Common myeloid progenitor, CD34-positive (primary cell): ENCODE measurements at regions of chr14 and their contacts with region 1.

Region 1: DNA sequence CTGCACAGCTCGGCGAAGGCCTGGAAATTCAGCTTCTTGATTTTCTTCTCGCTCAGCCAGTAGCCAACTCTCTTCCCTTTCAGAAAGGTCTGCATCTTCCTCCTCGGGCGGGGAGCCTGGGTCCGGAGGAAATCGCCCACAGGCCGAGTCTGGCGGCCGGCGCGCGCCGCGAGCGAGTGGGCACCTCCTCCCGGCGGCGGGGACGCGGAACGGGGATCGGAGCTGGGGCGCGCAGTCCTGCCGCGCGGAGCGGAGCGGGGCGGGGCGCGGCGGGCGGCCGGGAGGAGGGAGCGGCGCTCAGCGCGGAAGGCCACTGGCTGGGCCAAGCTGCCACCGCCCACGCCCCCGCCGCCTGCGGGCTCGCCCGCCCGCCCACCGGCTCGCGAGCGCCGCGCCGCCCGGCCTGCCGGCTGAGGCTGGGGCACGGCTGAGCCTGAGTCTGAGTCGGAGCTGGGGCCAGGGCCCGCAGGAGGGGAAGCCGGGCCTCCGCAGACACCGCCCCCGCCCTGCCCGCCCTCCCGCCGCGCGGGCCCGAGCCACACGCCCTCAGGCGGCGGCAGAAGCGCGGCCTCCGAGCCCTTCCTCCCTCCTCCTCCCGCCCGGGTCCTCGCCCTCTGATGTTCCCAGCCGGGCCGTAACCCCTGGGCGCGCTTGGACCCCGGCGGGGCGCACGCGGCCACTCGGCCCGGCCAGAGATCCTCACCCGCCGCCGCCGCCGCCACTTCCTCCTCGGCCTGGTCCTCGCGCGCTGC is 480 bp downstream of the ITPK1 start:
- DNase-seq: peak; percentile 80 to 92 (median 88)
- H3K4me3 ChIP-seq: peak overlapping the region; percentile 77 to 91 (median 84)
- H3K27ac ChIP-seq: peak overlapping the region; percentile 33 to 54
- H3K4me1 ChIP-seq: peaks cover 9 to 54% (median 39%) of the 10 kb centered on the region in 4 experiments
- H3K27me3 ChIP-seq: no peaks in the 10 kb centered on the region

Region 2: GRCh38 chr14:92951912-92952471 is 163.3 kb before region 1 on chr14:
- CTCF ChIA-PET with region 1: interaction called, 11 read pairs
- POLR2A ChIA-PET with region 1: no interaction called
- DNase-seq: peak; percentile 65 to 83 (median 75)
- H3K4me3 ChIP-seq: no peak overlapping the region
- H3K27ac ChIP-seq: peak overlapping the region in 1 of 2 experiments; percentile 30
- H3K4me1 ChIP-seq: no peaks in the 10 kb centered on the region
- H3K27me3 ChIP-seq: no peaks in the 10 kb centered on the region

Region 3: DNA sequence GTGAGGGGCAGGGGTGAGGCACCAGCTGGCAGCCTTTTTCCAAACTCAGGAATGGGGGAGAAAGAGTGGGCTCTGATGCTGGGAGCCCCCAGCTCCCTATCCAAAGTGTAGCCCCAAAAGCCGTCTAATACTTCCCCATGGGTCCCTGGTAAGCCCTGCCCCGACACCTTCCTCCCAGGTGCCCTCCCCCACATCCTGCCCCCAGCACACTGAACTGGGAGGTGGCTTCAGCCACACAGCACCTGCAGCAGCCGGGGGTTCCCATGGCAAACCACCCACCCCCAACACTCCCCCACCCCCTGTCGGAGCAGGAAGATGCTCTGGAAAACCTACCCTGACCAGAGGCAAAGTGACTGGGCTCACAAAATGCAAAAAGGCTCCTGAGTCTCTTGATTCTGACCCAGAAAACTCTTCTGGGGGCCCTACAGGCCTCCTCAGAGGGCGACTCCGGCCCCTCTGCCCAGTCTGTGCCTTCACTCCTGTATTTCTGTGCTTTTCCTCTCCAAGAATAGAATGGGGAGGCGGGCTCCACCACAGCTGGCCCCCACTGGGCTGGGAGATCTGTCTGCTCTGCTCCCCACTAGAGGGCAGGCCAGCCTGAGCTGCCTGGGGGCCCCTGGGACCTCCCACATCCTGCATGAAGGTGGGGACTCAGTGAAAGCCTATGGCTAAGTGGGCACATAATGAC is 81.1 kb before region 1 on chr14:
- CTCF ChIA-PET with region 1: interaction called, 44 read pairs
- POLR2A ChIA-PET with region 1: interaction called, 3 read pairs
- DNase-seq: peak; percentile 38 to 64 (median 64)
- H3K4me3 ChIP-seq: no peak overlapping the region
- H3K27ac ChIP-seq: no peak overlapping the region
- H3K4me1 ChIP-seq: peaks cover 0 to 33% (median 28%) of the 10 kb centered on the region in 4 experiments
- H3K27me3 ChIP-seq: no peaks in the 10 kb centered on the region

Region 4: DNA sequence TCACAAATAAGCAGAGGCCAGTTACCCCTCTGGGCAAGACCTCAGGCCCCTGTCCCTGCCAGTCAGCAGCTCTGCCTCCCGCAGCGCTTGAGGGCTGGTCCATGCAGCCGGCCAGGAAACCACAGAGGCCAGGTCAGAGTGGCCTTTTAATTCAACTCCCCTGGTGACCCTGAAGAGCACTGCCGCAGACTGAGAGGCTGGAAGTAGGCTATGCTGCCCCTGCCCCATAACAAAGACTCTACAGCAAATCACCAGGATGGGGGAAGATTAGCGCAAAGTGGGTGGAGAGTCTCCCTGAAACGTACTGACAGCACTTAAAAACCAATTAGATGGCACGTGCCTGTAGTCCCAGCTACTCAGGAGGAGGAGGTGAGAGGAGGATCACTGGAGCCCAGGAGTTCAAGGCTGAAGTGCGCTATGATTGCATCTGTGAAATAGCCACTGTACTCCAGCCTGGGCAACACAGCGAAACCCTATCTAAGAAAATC is 70.0 kb before region 1 on chr14:
- CTCF ChIA-PET with region 1: interaction called, 24 read pairs
- POLR2A ChIA-PET with region 1: no interaction called
- DNase-seq: no peak
- H3K4me3 ChIP-seq: no peak overlapping the region
- H3K27ac ChIP-seq: peak overlapping the region in 1 of 2 experiments; percentile 39
- H3K4me1 ChIP-seq: peaks cover 0 to 88% (median 55%) of the 10 kb centered on the region in 4 experiments
- H3K27me3 ChIP-seq: no peaks in the 10 kb centered on the region

Region 5: DNA sequence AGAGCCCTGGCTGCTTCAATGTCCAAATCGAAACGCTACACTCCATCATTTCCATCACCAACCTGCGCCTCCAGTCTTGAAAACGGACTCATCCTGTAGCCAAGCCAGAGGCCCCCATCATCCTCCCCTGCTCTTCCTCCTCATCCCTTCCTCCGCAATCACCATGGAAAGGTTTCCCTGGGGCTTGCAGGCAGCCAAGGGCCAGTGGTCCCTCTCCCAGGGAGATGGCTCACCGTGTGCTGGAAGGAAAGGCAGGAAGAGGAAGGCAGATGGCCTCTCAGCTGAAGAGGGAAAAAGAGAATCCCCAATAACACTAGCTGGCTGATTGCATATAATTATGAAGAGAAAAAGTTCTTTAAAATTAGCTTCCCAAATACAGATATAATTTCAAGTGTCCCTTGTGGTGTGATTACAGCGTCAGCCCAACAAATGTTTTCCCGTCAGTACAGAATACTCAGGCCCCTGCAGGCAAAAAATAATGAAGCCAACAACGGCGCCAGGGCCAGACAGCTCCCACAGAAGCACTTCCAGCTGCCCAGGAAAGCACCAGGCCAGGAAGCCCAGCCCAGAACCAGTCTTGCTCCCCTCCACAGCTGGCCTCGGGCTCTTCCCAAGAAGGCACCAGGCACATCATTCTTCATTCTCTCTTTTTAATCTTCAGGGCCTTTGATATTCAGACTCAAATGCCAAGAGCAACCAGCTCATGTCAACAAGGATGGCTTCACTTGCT is 24.3 kb before region 1 on chr14:
- CTCF ChIA-PET with region 1: interaction called, 13 read pairs
- POLR2A ChIA-PET with region 1: no interaction called
- DNase-seq: no peak
- H3K4me3 ChIP-seq: no peak overlapping the region
- H3K27ac ChIP-seq: no peak overlapping the region
- H3K4me1 ChIP-seq: peaks cover 0 to 24% (median 11%) of the 10 kb centered on the region in 4 experiments
- H3K27me3 ChIP-seq: no peaks in the 10 kb centered on the region

Region 6: DNA sequence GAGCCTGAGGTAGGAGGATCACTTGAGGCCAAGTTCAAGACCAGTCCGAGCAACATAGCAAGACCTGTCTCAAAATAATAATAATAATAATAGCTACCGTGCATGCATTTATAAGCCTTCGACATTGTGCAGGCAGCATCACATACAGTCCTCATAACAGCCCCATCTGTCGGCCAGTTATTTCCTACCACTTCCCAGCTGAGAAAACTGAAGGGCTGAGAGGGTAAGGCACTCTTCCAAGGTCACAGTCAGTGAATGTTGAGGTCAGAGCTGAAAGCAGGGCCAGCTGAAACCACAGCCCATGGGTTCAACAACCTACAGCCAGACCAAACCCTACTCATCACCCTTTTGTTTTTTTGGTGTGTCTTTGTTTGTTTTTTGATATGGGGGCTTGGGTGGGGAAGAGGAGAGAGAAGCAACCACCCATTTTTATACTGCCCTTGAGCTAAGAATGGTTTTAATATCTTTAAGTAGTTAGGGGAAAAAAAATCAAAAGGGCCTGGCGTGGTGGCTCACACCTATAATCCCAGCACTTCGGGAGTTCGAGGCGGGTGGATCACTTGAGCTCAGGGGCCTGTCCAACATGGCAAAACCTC is 17.3 kb after region 1 on chr14:
- CTCF ChIA-PET with region 1: interaction called, 225 read pairs
- POLR2A ChIA-PET with region 1: no interaction called
- DNase-seq: peak; percentile 45 to 71 (median 70)
- H3K4me3 ChIP-seq: no peak overlapping the region
- H3K27ac ChIP-seq: no peak overlapping the region
- H3K4me1 ChIP-seq: no peaks in the 10 kb centered on the region
- H3K27me3 ChIP-seq: no peaks in the 10 kb centered on the region

Region 7: GRCh38 chr14:93146119-93146518 is 30.9 kb after region 1 on chr14:
- CTCF ChIA-PET with region 1: interaction called, 225 read pairs
- POLR2A ChIA-PET with region 1: no interaction called
- DNase-seq: no peak
- H3K4me3 ChIP-seq: no peak overlapping the region
- H3K27ac ChIP-seq: no peak overlapping the region
- H3K4me1 ChIP-seq: peaks cover 0 to 7% (median 0%) of the 10 kb centered on the region in 4 experiments
- H3K27me3 ChIP-seq: no peaks in the 10 kb centered on the region